ENCODE measurements at regions of chr11 and their contacts with region 1.

Region 1: GRCh38 chr11:19712281-19713220 is at the start of gene NAV2:
- DNase-seq: peak; percentile 70
- H3K4me3 ChIP-seq: peak within 1 kb of the TSS; percentile 85
- H3K27ac ChIP-seq: peak within 1 kb of the TSS; percentile 99
- H3K27me3 ChIP-seq: no peaks in the 10 kb centered on the region
- CTCF ChIP-seq: no peak
- polyA plus RNA-seq, gene NAV2: 5.1 and 7.2 TPM in 2 replicates

Region 2: GRCh38 chr11:19595840-19596751 is 116.5 kb before region 1 on chr11:
- CTCF ChIA-PET with region 1: no interaction called
- POLR2A ChIA-PET with region 1: interaction called, 14 read pairs
- DNase-seq: peak; percentile 55
- H3K4me3 ChIP-seq: no peak overlapping the region
- H3K27ac ChIP-seq: peak overlapping the region; percentile 96
- H3K27me3 ChIP-seq: no peaks in the 10 kb centered on the region
- CTCF ChIP-seq: no peak

Region 3: DNA sequence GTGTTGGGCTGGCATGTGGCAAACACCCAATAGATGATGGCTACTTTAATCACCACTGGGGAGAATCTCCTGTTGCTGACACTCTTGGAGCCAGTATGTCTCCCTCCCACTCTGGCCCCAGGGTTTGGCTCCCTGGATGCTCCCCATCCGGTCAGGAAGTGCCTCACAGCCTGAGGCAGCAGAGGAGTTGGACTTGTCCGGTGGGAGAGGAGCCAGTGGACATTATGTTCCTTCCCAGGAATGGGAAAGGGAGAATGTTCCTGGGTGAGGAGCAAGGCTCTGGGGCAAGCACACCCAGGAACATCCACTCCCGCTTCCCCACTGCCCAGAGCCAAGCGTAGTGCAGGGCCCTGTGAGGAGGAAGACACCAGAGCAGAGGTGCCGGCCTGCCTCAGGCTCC is 84.5 kb before region 1 on chr11:
- CTCF ChIA-PET with region 1: interaction called, 12 read pairs
- POLR2A ChIA-PET with region 1: no interaction called
- DNase-seq: no peak
- H3K4me3 ChIP-seq: no peak overlapping the region
- H3K27ac ChIP-seq: no peak overlapping the region
- H3K27me3 ChIP-seq: no peaks in the 10 kb centered on the region
- CTCF ChIP-seq: no peak

Region 4: DNA sequence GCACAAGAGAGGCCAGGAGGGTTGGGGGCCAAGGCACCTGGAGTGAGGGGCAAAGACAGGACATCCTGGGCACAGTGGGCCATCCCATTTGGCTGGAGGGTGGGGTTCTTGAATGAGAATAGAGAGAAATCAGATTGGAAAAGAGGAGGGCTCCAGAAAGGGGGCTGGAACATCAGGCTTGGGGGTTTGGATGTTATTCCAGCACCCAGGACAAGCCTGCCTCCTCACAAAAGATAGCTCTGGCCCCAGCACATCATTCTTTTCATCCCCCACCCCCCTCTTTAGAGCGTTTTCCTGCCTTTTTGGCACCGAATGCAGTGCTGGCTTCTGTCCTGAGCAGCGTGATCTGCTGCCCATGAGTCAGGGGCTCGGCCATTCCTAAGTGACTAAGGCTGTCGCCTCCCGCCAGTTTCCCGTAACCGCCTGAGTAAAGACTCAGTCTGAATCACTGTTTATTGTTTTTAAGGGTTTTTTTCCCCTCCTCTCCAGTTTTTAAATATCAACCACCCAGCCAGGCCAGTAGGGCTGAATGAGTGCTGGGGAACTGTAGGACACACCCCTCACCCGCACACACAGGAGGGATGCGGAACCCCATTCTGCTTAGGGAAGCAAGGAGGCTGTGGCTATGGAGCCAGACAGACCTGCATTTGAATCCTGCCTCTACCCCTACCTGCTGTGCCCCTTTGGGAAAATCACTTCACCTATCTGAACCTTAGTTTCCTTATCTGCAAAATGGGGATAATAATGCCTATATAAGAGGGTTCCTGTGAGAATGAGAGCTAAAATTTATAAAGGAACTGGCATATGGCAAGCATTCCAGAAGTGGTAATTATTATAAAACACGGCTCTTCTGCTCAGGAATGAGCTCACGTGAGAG is 32.4 kb before region 1 on chr11:
- CTCF ChIA-PET with region 1: no interaction called
- POLR2A ChIA-PET with region 1: interaction called, 12 read pairs
- DNase-seq: peak; percentile 94
- H3K4me3 ChIP-seq: 0 out of 2 replicates have a peak overlapping the region, but pooled peaks have one; percentile 1
- H3K27ac ChIP-seq: peak overlapping the region; percentile 83
- H3K27me3 ChIP-seq: peaks cover 2% of the 10 kb centered on the region
- CTCF ChIP-seq: 0 out of 2 replicates have a peak, but pooled peaks have one; percentile 19